K562 (cell line): ENCODE measurements at regions of chr2 and their contacts with region 1.

Region 1: GRCh38 chr2:176018708-176019107 is 16.6 kb upstream of the LNPK start:
- DNase-seq: peak; percentile 25 to 57 (median 42)
- ATAC-seq: peak; percentile 82
- H3K4me3 ChIP-seq: no peak overlapping the region
- H3K27ac ChIP-seq: peak overlapping the region; percentile 67
- H3K4me1 ChIP-seq: peaks cover 10 to 25% of the 10 kb centered on the region in 2 experiments
- H3K27me3 ChIP-seq: no peaks in the 10 kb centered on the region
- CTCF ChIP-seq: no peak
- EP300 ChIP-seq: no peak; the same call in 1 of the 2 replicates
- POLR2A ChIP-seq: no peak
- RAD21 ChIP-seq: 0 out of 4 replicates have a peak, but pooled peaks of 1 of the 2 experiments have one; percentile 8

Region 2: GRCh38 chr2:176001916-176002687 is 16.6 kb before region 1 on chr2 and contains the start of gene LNPK:
- CTCF ChIA-PET with region 1: no interaction called
- POLR2A ChIA-PET with region 1: interaction called, 6 read pairs
- in situ Hi-C with region 1: no loop called
- intact Hi-C with region 1: loop called (anchors 2 kb)
- DNase-seq: peak; percentile 96 to 98 (median 98)
- ATAC-seq: peak; percentile 93
- H3K4me3 ChIP-seq: peak within 1 kb of the TSS; percentile 72
- H3K27ac ChIP-seq: peak within 1 kb of the TSS; percentile 79
- H3K4me1 ChIP-seq: peaks cover 23 to 40% of the 10 kb centered on the region in 2 experiments; a peak in 4 of 5 replicates
- H3K27me3 ChIP-seq: no peaks in the 10 kb centered on the region
- CTCF ChIP-seq: no peak
- EP300 ChIP-seq: peak; percentile 40
- POLR2A ChIP-seq: peak; percentile 94
- RAD21 ChIP-seq: no peak
- polyA plus RNA-seq, gene LNPK: 6.4 to 8.7 TPM